Prostate gland (tissue), 2 donors: ENCODE measurements at regions of chr13 and their contacts with region 1.

Region 1: GRCh38 chr13:77329133-77329910 is 2.4 kb upstream of the MYCBP2 start:
- DNase-seq: peak; percentile 88
- H3K4me3 ChIP-seq: peak overlapping the region; percentile 57 to 76
- H3K27ac ChIP-seq: peak overlapping the region; percentile 83 to 89
- H3K4me1 ChIP-seq: no peaks in the 10 kb centered on the region
- H3K27me3 ChIP-seq: no peaks in the 10 kb centered on the region
- CTCF ChIP-seq: peak in 2 of 4 experiments; percentile 6 to 10
- POLR2A ChIP-seq: peak; percentile 51

Region 2: GRCh38 chr13:77026818-77027585 is 302.3 kb before region 1 on chr13 and contains the start of gene FBXL3:
- intact Hi-C with region 1: loop called (anchors 2 kb)
- DNase-seq: peak; percentile 85
- H3K4me3 ChIP-seq: peak within 1 kb of the TSS; percentile 96 to 97
- H3K27ac ChIP-seq: peak within 1 kb of the TSS; percentile 98 to 99
- H3K4me1 ChIP-seq: no peaks in the 10 kb centered on the region
- H3K27me3 ChIP-seq: no peaks in the 10 kb centered on the region
- CTCF ChIP-seq: no peak
- POLR2A ChIP-seq: peak; percentile 67
- total RNA-seq, gene FBXL3: 85.6 to 113 TPM

Region 3: GRCh38 chr13:77267362-77267761 is 62.0 kb before region 1 on chr13:
- intact Hi-C with region 1: loop called (anchors 10 kb)
- DNase-seq: no peak
- H3K4me3 ChIP-seq: no peak overlapping the region
- H3K27ac ChIP-seq: no peak overlapping the region
- H3K4me1 ChIP-seq: no peaks in the 10 kb centered on the region
- H3K27me3 ChIP-seq: no peaks in the 10 kb centered on the region
- CTCF ChIP-seq: no peak
- POLR2A ChIP-seq: no peak

Region 4: DNA sequence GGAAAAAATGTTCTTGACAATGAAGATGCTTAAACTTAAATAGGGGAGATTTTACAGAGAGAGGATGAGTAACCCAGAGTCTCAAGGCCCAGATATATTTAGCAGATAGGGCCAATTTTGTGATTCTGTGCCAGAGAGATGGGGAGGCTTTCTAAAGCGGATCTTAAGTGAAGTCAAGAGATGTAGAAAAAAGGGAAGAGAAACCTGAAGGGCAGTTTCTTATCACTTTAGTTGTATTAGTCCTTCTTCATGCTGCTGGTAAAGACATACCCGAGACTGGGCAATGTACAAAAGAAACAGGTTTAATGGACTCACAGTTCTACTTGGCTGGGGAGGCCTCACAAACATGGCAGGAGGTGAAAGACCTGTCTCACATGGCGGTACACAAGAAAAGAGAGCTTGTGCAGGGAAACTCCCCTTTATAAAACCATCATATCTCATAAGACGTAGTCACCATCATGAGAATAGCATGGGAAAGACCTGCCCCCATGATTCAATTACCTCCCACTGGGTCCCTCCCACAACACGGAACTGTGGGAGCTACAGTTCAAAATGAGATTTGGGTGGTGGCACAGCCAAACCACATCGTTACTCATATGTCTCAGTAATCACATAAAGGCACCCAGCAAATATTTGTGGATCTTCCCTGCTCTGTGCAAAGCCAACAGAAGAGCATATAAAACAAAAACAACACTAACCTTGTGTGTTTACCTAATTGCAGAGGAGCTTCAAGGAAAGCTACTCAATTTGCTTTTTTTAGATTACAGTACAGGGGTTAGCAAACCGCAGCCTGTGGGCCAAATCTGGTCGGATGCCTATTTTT is 100.2 kb after region 1 on chr13:
- intact Hi-C with region 1: no loop called
- DNase-seq: peak; percentile 53
- H3K4me3 ChIP-seq: no peak overlapping the region
- H3K27ac ChIP-seq: no peak overlapping the region
- H3K4me1 ChIP-seq: no peaks in the 10 kb centered on the region
- H3K27me3 ChIP-seq: no peaks in the 10 kb centered on the region
- CTCF ChIP-seq: no peak
- POLR2A ChIP-seq: no peak